ENCODE measurements at regions of chr20 and their contacts with region 1.

Region 1: GRCh38 chr20:9912858-9913434 is 74.1 kb upstream of the PAK5 start:
- DNase-seq: peak; percentile 28
- H3K4me3 Mint-ChIP-seq: no peak overlapping the region
- H3K27ac Mint-ChIP-seq: no peak overlapping the region
- H3K4me1 Mint-ChIP-seq: peaks cover 2% of the 10 kb centered on the region
- H3K27me3 Mint-ChIP-seq: peaks cover 14% of the 10 kb centered on the region

Region 2: DNA sequence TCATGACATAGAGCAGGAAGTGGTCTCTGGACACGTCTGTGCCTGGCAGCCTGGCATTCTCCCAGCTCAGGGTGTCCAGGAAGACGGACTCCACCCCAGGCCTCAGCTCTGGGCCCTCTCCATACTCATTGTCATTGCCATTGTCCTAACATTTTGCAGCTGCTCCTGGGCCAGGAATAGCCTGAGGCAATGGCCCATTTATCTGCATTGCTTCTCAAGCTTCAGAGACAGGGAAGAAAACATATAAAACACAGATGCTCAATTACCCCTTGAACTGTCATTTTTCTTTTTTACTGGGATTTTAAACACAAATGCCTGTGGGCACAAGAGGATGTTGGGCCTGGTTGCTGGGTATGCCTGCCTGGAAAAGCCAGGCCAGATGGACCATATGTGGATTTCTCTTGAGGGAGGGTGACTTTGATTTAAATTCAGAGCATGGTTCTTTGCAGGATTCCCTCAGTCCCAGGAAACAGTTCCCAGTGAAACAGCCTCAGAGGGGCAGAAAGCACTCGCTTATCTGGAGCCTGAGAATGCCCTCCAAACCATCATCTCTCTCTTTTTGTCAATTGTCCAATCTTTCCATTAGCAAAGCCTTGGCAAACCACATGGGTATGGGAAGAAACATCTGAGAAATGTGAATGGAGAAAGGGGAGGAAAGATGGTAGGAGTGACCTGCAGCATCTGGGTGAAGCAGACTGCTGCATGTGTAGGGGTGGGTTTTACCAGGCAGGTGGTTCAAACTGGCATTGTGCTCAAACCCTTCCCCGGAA is 380.7 kb before region 1 on chr20:
- CTCF ChIA-PET with region 1: no interaction called
- POLR2A ChIA-PET with region 1: no interaction called
- intact Hi-C with region 1: no loop called
- DNase-seq: no peak
- H3K4me3 Mint-ChIP-seq: no peak overlapping the region
- H3K27ac Mint-ChIP-seq: no peak overlapping the region
- H3K4me1 Mint-ChIP-seq: no peaks in the 10 kb centered on the region
- H3K27me3 Mint-ChIP-seq: no peaks in the 10 kb centered on the region

Region 3: GRCh38 chr20:9616833-9617489 is 296.0 kb before region 1 on chr20:
- CTCF ChIA-PET with region 1: interaction called, 46 read pairs
- POLR2A ChIA-PET with region 1: no interaction called
- intact Hi-C with region 1: no loop called
- DNase-seq: peak; percentile 60
- H3K4me3 Mint-ChIP-seq: no peak overlapping the region
- H3K27ac Mint-ChIP-seq: no peak overlapping the region
- H3K4me1 Mint-ChIP-seq: no peaks in the 10 kb centered on the region
- H3K27me3 Mint-ChIP-seq: peaks cover 3% of the 10 kb centered on the region

Region 4: DNA sequence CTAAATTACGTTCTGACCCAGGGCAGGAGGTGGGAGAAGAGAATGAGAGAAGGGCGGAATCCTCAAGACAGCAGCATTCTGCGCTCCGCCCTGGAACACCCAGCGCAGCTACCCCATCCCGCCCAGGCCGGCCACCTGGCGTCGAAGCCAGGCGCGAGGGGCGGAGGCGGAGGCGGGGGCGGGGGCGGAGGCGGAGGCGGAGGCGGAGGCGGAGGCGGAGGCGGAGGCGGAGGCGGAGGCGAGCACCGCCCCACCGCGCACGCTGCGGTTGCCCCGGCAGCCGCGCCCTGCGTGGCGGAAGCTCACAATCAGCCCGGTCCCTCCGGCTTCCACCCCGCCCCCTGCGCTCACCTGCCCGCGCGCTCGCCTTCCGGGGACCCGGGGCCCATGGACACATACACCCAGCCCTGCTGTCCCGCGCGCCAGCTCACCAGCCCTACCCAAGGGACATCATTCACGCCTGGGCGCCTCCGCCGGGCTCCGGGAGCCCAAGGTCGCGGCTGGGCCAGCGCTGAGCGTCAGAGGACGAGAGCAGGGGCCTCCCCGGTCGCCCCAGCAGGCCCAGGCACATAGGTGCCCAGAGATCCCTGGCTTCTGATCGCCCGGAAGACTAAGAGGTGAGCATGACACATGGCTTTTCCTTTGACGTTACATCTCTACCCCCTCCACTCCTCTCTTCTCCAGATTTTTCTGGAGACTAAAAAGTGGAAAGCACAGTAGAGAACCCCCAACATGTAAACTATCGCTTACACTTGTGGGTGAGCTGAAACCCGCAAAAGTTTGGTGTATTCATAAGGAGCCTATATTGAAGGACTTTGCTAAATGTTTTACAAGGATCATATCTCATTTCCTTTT is 122.0 kb after region 1 on chr20 and contains the start of gene ANKEF1:
- CTCF ChIA-PET with region 1: no interaction called
- POLR2A ChIA-PET with region 1: no interaction called
- intact Hi-C with region 1: no loop called
- DNase-seq: peak; percentile 75
- H3K4me3 Mint-ChIP-seq: peak within 1 kb of the TSS; percentile 61
- H3K27ac Mint-ChIP-seq: no peak within 1 kb of the TSS
- H3K4me1 Mint-ChIP-seq: peaks cover 3% of the 10 kb centered on the region
- H3K27me3 Mint-ChIP-seq: peaks cover 6% of the 10 kb centered on the region
- total RNA-seq, gene ANKEF1: 1.3 TPM

Measured in activated CD4-positive, alpha-beta memory T cell treated with anti-CD3 and anti-CD28 coated beads for 36 hours (primary cell).